Uterus (tissue), 4 donors: ENCODE measurements at regions of chr7 and their contacts with region 1.

Region 1: GRCh38 chr7:35985126-35985754 is 167.8 kb upstream of the EEPD1 start:
- DNase-seq: peak; percentile 75 to 76
- H3K4me3 ChIP-seq: no peak overlapping the region
- H3K27ac ChIP-seq: no peak overlapping the region
- H3K4me1 ChIP-seq: no peaks in the 10 kb centered on the region
- H3K27me3 ChIP-seq: no peaks in the 10 kb centered on the region
- CTCF ChIP-seq: peak; percentile 86 to 97 (median 90)
- POLR2A ChIP-seq: no peak

Region 2: DNA sequence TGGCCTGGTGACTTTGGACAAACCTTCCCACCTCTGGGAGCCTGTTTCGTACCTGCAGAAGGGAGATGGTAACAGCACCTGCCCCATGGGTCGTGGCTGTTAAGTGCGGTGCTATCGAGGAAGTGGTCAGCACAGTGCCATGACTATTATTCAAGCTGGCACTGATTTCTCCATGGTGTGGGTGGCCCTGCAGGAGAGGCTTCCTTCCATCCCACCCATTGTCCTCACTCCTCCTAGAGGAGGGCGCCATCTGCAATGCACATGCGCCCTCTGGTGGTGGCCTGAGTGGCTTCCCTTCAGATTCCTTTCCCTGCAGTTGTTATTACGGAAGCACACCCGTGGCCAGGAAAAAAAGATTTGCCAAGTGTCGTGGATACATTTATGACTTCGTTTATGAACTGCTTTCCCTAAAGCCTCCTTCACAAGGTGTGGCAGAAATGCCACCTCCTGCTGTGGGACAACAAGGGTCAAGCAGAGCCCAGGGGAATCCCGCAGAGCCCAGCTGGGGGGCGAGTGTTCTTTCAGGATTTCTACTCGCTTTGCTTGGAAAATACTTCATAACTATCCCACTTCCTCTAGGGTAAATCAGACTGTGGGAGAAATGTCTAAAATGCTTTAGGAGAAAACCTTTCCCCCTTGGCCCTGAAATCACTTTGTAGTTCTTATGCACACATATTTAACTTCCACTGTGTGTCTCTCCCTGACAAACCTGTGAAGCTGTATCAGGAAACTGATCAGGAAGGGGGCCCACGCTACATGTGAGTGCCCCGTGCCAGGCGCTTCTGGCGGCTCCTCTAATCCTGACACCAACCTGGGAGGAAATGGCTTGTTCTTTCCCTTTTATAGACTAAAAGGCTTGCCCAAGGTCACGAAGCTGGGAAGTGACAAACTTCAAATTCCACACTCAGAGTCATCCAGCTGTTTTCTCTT is 306.4 kb after region 1 on chr7:
- intact Hi-C with region 1: loop called (anchors 2 kb)
- DNase-seq: peak; percentile 85 to 88
- H3K4me3 ChIP-seq: peak overlapping the region; percentile 21 to 32
- H3K27ac ChIP-seq: peak overlapping the region; percentile 85 to 88
- H3K4me1 ChIP-seq: no peaks in the 10 kb centered on the region
- H3K27me3 ChIP-seq: no peaks in the 10 kb centered on the region
- CTCF ChIP-seq: peak; percentile 96 to 98 (median 97)
- POLR2A ChIP-seq: peak in 1 of 2 donors; percentile 27

Region 3: GRCh38 chr7:36308031-36308430 is 322.8 kb after region 1 on chr7:
- intact Hi-C with region 1: loop called (anchors 5 kb)
- DNase-seq: no peak
- H3K4me3 ChIP-seq: no peak overlapping the region
- H3K27ac ChIP-seq: no peak overlapping the region
- H3K4me1 ChIP-seq: peaks cover 0 to 6% of the 10 kb centered on the region in 2 donors
- H3K27me3 ChIP-seq: no peaks in the 10 kb centered on the region
- CTCF ChIP-seq: no peak
- POLR2A ChIP-seq: no peak